ENCODE measurements at regions of chr12 and their contacts with region 1.

Region 1: GRCh38 chr12:69225251-69225910 is 14.0 kb upstream of the CPSF6 start:
- DNase-seq: no peak
- H3K4me3 Mint-ChIP-seq: no peak overlapping the region
- H3K27ac Mint-ChIP-seq: no peak overlapping the region
- H3K4me1 Mint-ChIP-seq: no peaks in the 10 kb centered on the region
- H3K27me3 Mint-ChIP-seq: no peaks in the 10 kb centered on the region

Region 2: DNA sequence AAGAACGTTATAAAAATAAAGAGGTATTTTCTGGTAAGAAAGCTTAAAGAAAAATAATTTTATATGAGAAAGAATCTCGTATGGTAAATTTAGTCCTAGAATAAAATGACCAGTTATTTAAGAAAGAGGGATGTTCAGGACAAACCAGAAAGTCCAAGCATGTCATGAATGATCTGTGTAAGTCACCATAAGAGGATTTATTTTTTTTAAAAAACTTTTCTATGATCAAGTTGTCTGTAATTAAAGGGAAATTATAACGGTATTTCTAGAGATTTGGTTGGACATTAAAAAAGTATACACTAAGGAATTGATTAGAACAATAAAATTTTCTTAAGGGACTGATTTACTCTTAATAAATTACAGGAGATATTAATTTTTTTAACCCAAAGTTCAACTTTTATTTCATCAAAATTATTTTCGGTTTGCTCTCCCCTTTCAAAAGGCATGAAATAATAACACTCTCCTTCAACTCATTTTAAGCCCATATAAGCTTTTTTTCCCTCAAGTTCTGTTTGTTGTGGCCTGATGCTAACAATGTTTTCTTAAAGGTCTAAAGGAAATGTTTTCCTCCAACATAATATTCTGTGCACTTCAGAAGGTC is 35.9 kb before region 1 on chr12:
- CTCF ChIA-PET with region 1: no interaction called
- POLR2A ChIA-PET with region 1: no interaction called
- intact Hi-C with region 1: loop called (anchors 5 kb)
- DNase-seq: no peak
- H3K4me3 Mint-ChIP-seq: no peak overlapping the region
- H3K27ac Mint-ChIP-seq: no peak overlapping the region
- H3K4me1 Mint-ChIP-seq: no peaks in the 10 kb centered on the region
- H3K27me3 Mint-ChIP-seq: peaks cover 3% of the 10 kb centered on the region

Region 3: GRCh38 chr12:69392179-69392928 is 167.0 kb after region 1 on chr12:
- CTCF ChIA-PET with region 1: no interaction called
- POLR2A ChIA-PET with region 1: no interaction called
- intact Hi-C with region 1: no loop called
- DNase-seq: no peak
- H3K4me3 Mint-ChIP-seq: no peak overlapping the region
- H3K27ac Mint-ChIP-seq: no peak overlapping the region
- H3K4me1 Mint-ChIP-seq: peaks cover 12% of the 10 kb centered on the region
- H3K27me3 Mint-ChIP-seq: no peaks in the 10 kb centered on the region